ENCODE measurements at regions of chr15 and their contacts with region 1.

Region 1: DNA sequence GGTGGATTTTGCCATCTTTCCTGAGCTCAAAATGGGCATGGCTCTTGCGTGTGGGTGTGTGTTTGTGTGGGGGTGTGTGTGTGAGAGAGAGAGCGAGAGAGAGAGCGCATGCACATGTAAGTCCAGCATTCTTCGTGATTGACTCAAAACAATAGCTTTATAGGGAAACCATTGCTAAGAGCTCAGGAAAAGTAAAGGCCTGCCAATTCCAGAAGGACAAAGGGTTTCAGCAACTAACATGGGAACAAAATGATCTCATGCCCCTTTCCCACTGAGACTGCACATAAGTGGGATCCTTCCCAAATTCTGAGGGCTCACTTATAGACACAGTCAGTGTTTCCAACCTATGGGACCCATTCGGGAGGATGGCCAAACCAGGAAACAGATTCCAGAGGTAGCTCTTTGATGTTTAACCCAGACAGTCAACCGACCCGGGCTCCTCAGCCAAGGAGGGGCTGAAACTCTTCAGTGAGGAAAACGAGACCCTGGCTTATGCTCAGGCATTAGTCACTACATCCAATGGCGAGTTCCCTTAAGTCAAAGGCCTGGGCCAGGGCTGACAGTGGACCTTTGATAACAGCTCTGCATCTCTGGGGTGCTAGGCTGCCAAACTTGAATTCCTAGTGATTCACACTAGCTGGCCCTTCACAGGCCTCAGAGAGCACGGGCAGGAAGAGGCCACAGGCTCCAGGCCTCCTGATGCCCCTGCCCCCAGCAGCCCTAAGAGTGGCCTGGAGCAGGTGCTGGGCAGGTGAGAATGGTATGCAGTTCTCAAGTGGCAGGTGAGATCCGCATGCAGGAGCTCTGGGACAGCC is 305.0 kb upstream of the C2CD4B start:
- DNase-seq: peak; percentile 78 to 88 (median 84)
- ATAC-seq: peak; percentile 89 to 91
- H3K4me3 ChIP-seq: no peak overlapping the region
- H3K27ac ChIP-seq: peak overlapping the region; percentile 92
- H3K4me1 ChIP-seq: peaks cover 24% of the 10 kb centered on the region
- H3K27me3 ChIP-seq: no peaks in the 10 kb centered on the region

Region 2: GRCh38 chr15:62549345-62549970 is 79.4 kb after region 1 on chr15:
- intact Hi-C with region 1: loop called in 1 of 4 experiments (anchors 10 kb)
- DNase-seq: peak in 1 of 3 donors; percentile 58
- ATAC-seq: no peak
- H3K4me3 ChIP-seq: no peak overlapping the region
- H3K27ac ChIP-seq: no peak overlapping the region
- H3K4me1 ChIP-seq: peaks cover 13% of the 10 kb centered on the region
- H3K27me3 ChIP-seq: no peaks in the 10 kb centered on the region

Measured in right cardiac atrium (tissue), 5 donors.